ENCODE measurements at regions of chr18 and their contacts with region 1.

Region 1: GRCh38 chr18:79523736-79524180 is 128.0 kb downstream of the NFATC1 start:
- DNase-seq: no peak
- ATAC-seq: peak; percentile 63
- H3K4me3 Mint-ChIP-seq: peak overlapping the region; percentile 81
- H3K27ac Mint-ChIP-seq: peak overlapping the region; percentile 91
- H3K4me1 Mint-ChIP-seq: peaks cover 64% of the 10 kb centered on the region
- H3K27me3 Mint-ChIP-seq: no peaks in the 10 kb centered on the region
- CTCF ChIP-seq: no peak

Region 2: GRCh38 chr18:79405781-79406575 is 117.8 kb before region 1 on chr18:
- CTCF ChIA-PET with region 1: interaction called, 4 read pairs
- POLR2A ChIA-PET with region 1: interaction called, 26 read pairs
- intact Hi-C with region 1: loop called (anchors 1 kb)
- DNase-seq: peak; percentile 81
- ATAC-seq: peak; percentile 89
- H3K4me3 Mint-ChIP-seq: peak overlapping the region; percentile 80
- H3K27ac Mint-ChIP-seq: peak overlapping the region; percentile 98
- H3K4me1 Mint-ChIP-seq: peaks cover 65% of the 10 kb centered on the region
- H3K27me3 Mint-ChIP-seq: no peaks in the 10 kb centered on the region
- CTCF ChIP-seq: no peak

Region 3: DNA sequence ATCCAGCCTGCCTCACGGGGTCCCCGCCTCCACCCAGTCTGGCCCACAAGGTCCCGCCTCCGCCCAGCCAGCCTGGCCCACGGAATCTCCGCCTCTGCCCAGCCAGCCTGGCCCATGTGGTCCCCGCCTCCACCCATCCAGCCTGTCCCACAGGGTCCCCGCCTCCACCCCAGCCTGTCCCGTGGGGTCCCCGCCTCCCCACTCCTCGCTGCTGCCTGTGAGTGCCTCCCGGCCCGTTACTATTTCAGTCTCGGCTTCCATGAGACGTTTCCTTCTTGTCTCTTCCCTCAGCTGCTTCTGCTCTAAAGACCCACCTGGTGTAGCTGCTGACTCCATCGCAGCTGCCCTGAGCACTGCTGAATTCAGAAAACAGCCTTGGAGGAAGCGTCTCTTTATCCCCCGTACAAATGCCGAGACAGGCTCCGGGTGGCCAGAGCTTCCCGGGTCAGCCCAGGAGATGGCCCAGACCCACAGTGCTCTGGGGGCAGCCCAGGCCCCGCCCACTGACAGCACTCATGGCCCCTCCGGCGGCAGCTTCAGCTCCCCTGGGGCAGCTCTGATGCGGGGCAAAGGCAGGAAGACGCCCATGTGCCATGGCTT is 58.3 kb before region 1 on chr18:
- CTCF ChIA-PET with region 1: interaction called, 5 read pairs
- POLR2A ChIA-PET with region 1: interaction called, 38 read pairs
- intact Hi-C with region 1: loop called (anchors 1 kb)
- DNase-seq: peak; percentile 69
- ATAC-seq: peak; percentile 80
- H3K4me3 Mint-ChIP-seq: peak overlapping the region; percentile 92
- H3K27ac Mint-ChIP-seq: peak overlapping the region; percentile 97
- H3K4me1 Mint-ChIP-seq: peaks cover 77% of the 10 kb centered on the region
- H3K27me3 Mint-ChIP-seq: no peaks in the 10 kb centered on the region
- CTCF ChIP-seq: no peak

Region 4: GRCh38 chr18:79507076-79507545 is 16.6 kb before region 1 on chr18:
- CTCF ChIA-PET with region 1: interaction called, 18 read pairs
- POLR2A ChIA-PET with region 1: interaction called, 45 read pairs
- intact Hi-C with region 1: loop called (anchors 1 kb)
- DNase-seq: peak; percentile 48
- ATAC-seq: peak; percentile 47
- H3K4me3 Mint-ChIP-seq: peak overlapping the region; percentile 70
- H3K27ac Mint-ChIP-seq: peak overlapping the region; percentile 89
- H3K4me1 Mint-ChIP-seq: peaks cover 63% of the 10 kb centered on the region
- H3K27me3 Mint-ChIP-seq: no peaks in the 10 kb centered on the region
- CTCF ChIP-seq: no peak

Region 5: GRCh38 chr18:79611040-79611681 is 87.4 kb after region 1 on chr18:
- CTCF ChIA-PET with region 1: no interaction called
- POLR2A ChIA-PET with region 1: no interaction called
- intact Hi-C with region 1: no loop called
- DNase-seq: no peak
- ATAC-seq: no peak
- H3K4me3 Mint-ChIP-seq: no peak overlapping the region
- H3K27ac Mint-ChIP-seq: no peak overlapping the region
- H3K4me1 Mint-ChIP-seq: no peaks in the 10 kb centered on the region
- H3K27me3 Mint-ChIP-seq: peaks cover 3% of the 10 kb centered on the region
- CTCF ChIP-seq: no peak

Region 6: DNA sequence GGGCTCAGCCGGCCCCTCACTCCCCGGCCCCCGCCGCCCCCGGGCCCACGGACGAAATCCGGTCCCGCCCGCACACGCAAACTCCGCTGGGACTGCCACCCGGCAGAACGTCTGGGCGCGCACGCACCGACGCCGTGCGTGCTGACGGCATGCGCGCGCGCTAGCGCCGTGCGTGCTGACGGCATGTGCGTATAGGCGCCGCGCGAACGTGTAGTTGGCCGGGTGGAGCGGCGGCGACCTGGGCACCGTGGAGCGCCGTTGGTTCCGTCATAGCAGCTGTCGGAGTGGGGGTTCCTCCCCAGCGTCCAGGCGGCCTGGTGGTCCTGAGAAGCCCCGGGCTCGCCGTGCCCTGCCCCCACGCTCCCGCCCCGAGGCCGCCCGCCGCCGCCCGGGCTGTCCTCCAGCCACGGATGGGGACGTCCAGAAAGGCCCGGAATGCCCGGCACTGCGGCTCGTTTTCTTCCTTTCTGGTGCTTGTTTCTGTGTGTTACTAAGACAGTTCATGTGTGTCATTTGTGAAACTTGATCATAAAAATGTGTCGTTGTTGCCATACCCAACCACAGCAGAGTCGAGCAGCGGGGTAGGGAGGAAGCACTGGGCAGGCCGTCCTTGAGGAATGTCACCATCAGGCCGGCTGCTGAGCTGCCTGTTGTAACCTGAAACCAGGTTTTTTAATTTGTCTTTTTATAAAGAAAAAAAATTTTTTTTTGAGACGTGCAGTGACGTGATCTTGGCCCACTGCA is 464.9 kb after region 1 on chr18 and contains the start of gene TXNL4A:
- CTCF ChIA-PET with region 1: no interaction called
- POLR2A ChIA-PET with region 1: no interaction called
- intact Hi-C with region 1: loop called (anchors 1 kb)
- DNase-seq: peak; percentile 87
- ATAC-seq: peak; percentile 92
- H3K4me3 Mint-ChIP-seq: peak within 1 kb of the TSS; percentile 91
- H3K27ac Mint-ChIP-seq: peak within 1 kb of the TSS; percentile 92
- H3K4me1 Mint-ChIP-seq: peaks cover 34% of the 10 kb centered on the region
- H3K27me3 Mint-ChIP-seq: no peaks in the 10 kb centered on the region
- CTCF ChIP-seq: no peak
- total RNA-seq, gene TXNL4A: 94.7 and 96.9 TPM in 2 replicates

Measured in activated B cell treated with CpG ODN at 0.5 μM for 24 hours (primary cell).